Ascending aorta (tissue), 2 donors: ENCODE measurements at regions of chr17 and their contacts with region 1.

Region 1: GRCh38 chr17:68457539-68458259 is 403 bp upstream of the WIPI1 start:
- DNase-seq: peak; percentile 97 to 99
- H3K4me3 ChIP-seq: peak overlapping the region; percentile 64 to 100
- H3K27ac ChIP-seq: peak overlapping the region; percentile 96 to 100
- H3K4me1 ChIP-seq: peaks cover 10 to 17% of the 10 kb centered on the region in 2 donors
- H3K27me3 ChIP-seq: no peaks in the 10 kb centered on the region
- CTCF ChIP-seq: no peak

Region 2: DNA sequence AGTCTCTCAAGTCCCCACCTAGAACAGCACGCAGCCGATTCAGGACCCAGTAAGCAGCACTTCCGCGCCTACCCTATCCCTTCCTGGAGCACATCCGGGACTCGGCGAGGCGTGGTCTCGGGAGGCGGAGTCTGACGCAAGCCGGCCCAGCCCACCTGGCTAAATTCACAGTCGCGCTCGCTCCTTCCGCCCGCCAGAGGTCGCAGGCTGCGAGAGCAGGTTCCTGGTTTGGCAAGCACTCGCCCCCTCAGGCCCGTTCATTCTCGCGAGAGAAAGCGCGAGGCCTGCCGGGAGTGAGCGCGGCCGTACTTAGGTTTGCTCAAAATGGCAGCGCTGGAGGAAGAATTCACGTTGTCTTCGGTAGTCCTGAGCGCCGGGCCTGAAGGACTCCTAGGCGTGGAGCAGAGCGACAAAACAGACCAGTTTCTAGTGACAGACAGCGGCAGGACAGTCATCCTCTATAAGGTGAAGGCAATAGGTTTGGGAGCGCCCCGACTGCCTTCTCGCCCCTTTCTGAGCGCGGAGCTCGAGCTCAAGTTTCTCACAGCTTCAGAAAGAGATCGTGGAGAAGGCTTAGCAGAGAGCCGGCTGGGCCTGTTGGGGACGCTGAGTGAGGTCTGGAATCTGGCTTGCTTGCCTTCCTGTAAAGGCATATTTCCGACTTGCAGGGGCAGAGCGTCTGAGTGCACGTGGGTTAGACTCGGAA is 739.9 kb before region 1 on chr17 and contains the start of gene NOL11:
- intact Hi-C with region 1: loop called (anchors 10 kb)
- DNase-seq: peak; percentile 95 to 100
- H3K4me3 ChIP-seq: peak within 1 kb of the TSS; percentile 91 to 97
- H3K27ac ChIP-seq: peak within 1 kb of the TSS; percentile 89 to 92
- H3K4me1 ChIP-seq: peaks cover 5 to 11% of the 10 kb centered on the region in 2 donors
- H3K27me3 ChIP-seq: no peaks in the 10 kb centered on the region
- CTCF ChIP-seq: peak; percentile 85 to 92 (median 87)
- total RNA-seq, gene NOL11: 22.0 TPM

Region 3: GRCh38 chr17:68035523-68036303 is 422.0 kb before region 1 on chr17 and contains the start of gene KPNA2:
- intact Hi-C with region 1: loop called (anchors 10 kb)
- DNase-seq: peak; percentile 78 to 95
- H3K4me3 ChIP-seq: peak within 1 kb of the TSS; percentile 90 to 97
- H3K27ac ChIP-seq: peak within 1 kb of the TSS; percentile 64 to 76
- H3K4me1 ChIP-seq: peaks cover 0 to 7% of the 10 kb centered on the region in 2 donors
- H3K27me3 ChIP-seq: no peaks in the 10 kb centered on the region
- CTCF ChIP-seq: no peak
- total RNA-seq, gene KPNA2: 11.6 TPM

Region 4: GRCh38 chr17:68205251-68205807 is 252.4 kb before region 1 on chr17:
- intact Hi-C with region 1: loop called (anchors 5 kb)
- DNase-seq: peak; percentile 64 to 95
- H3K4me3 ChIP-seq: peak overlapping the region; percentile 89 to 91
- H3K27ac ChIP-seq: peak overlapping the region; percentile 64 to 74
- H3K4me1 ChIP-seq: peaks cover 6 to 11% of the 10 kb centered on the region in 2 donors
- H3K27me3 ChIP-seq: peaks cover 4% of the 10 kb centered on the region
- CTCF ChIP-seq: peak; percentile 70 to 86 (median 75)

Region 5: DNA sequence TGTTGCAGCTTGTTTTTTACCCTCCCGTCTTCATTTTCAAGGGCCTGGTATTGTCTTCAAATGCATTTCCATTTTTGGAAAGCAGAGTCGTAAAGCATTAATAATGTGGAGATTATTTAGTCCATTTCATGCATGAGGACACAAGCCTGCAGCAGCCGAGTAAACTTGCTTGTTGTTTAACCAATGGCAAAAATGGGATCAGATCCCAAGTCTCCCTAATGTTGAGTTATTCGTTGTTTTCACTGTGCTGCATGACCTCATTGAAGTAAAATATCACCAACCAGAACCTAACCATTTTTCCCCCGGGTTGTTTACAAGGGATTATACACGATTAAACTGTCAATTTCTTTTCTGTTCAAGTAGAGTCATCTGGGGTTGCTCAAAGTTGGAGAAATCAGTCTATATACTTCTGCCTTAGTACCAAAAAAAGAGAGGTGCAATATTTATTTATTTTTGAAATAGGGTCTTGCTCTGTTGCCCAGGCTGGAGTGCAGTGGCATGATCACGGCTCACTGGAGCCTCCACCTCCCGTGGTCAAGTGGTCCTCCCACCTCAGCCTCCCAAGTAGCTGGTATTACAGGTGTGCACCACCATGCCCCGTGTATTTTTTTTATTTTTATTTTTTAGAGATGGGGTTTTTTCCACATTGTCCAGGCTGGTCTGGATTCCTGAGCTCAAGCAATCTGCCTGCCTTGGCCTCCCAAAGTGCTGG is 197.5 kb before region 1 on chr17:
- intact Hi-C with region 1: loop called (anchors 2 kb)
- DNase-seq: no peak
- H3K4me3 ChIP-seq: no peak overlapping the region
- H3K27ac ChIP-seq: no peak overlapping the region
- H3K4me1 ChIP-seq: peaks cover 0 to 5% of the 10 kb centered on the region in 2 donors
- H3K27me3 ChIP-seq: no peaks in the 10 kb centered on the region
- CTCF ChIP-seq: no peak

Region 6: DNA sequence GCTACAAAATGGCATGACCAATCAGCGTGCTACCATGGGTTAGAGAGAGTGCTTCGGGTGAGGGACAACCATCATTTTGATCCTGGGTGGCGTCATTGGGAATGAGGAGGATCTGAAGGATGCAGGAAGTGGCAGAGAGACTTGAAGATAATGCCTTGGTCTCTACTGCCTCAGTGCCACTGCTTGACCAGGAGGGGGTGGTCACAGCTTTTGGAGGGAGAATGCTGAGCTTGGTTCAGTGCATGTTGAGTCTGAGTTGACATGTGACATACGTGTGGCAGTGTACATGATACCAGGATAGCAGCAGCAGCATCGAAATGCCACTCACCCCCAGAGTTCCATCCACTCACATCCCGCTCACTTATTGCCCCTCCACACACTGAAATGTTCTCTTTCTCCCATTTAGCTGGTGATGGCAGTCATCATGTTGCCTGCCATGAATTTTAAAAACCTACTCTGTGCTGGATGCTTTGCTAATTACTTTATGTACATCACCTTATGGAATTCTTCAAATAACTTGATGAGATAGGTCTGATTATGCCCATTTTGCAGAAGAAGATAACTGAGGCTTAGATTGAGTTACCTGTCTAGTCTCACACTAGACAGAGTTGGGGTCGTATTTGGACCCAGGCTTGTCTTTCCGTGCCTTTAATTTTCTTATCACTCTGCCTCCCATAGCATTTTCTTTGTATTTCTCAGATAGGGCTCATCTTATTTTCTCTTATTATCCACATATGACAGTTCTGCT is 129.7 kb before region 1 on chr17:
- intact Hi-C with region 1: no loop called
- DNase-seq: no peak
- H3K4me3 ChIP-seq: no peak overlapping the region
- H3K27ac ChIP-seq: no peak overlapping the region
- H3K4me1 ChIP-seq: no peaks in the 10 kb centered on the region
- H3K27me3 ChIP-seq: no peaks in the 10 kb centered on the region
- CTCF ChIP-seq: no peak

Region 7: GRCh38 chr17:68512247-68512982 is 54.7 kb after region 1 on chr17 and contains the start of gene PRKAR1A:
- intact Hi-C with region 1: loop called (anchors 2 kb)
- DNase-seq: peak; percentile 78 to 96
- H3K4me3 ChIP-seq: peak within 1 kb of the TSS; percentile 88 to 100
- H3K27ac ChIP-seq: peak within 1 kb of the TSS; percentile 96
- H3K4me1 ChIP-seq: peaks cover 0 to 25% of the 10 kb centered on the region in 2 donors
- H3K27me3 ChIP-seq: no peaks in the 10 kb centered on the region
- CTCF ChIP-seq: peak in 1 of 3 experiments; percentile 11
- total RNA-seq, gene PRKAR1A: 233 TPM